Activated T-helper 1 cell treated with anti-CD3 and anti-CD28 coated beads, Interleukin-12 subunit alpha, Interleukin-12 subunit beta, Interleukin-2, Interleukin-4 antibody, amounts not matched to agents 30 ng/mL and 10 ng/mL and 1 ng/mL, durations not matched to agents 14 hours and 24 hours and 36 hours (primary cell): ENCODE measurements at regions of chr18 and their contacts with region 1.

Region 1: DNA sequence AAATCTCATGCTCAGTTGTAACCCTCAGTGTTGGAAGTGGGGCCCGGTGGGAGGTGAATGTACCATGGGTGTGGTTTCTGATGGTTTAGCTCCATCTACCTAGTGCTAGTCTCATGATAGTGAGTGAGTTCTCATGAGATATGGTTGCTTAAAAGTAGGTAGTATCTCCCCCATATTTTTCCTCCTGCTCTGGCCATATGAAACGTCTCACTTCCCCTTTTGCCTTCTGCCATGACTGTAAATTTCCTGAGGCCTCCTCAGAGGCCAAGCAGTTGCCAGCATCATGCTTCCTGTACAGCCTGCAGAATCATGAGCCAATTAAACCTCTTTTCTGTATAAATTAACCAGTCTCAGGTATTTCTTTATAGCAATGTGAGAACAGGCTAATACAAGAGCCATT is 62.8 kb upstream of the RNF152 start:
- DNase-seq: no peak
- H3K4me3 Mint-ChIP-seq: no peak overlapping the region
- H3K27ac Mint-ChIP-seq: no peak overlapping the region
- H3K4me1 Mint-ChIP-seq: peaks cover 49% of the 10 kb centered on the region
- H3K27me3 Mint-ChIP-seq: peaks cover 29% of the 10 kb centered on the region

Region 2: GRCh38 chr18:61765097-61765496 is 190.5 kb before region 1 on chr18:
- intact Hi-C with region 1: loop called (anchors 10 kb)
- DNase-seq: no peak
- H3K4me3 Mint-ChIP-seq: no peak overlapping the region
- H3K27ac Mint-ChIP-seq: no peak overlapping the region
- H3K4me1 Mint-ChIP-seq: no peaks in the 10 kb centered on the region
- H3K27me3 Mint-ChIP-seq: peaks cover 18% of the 10 kb centered on the region

Region 3: DNA sequence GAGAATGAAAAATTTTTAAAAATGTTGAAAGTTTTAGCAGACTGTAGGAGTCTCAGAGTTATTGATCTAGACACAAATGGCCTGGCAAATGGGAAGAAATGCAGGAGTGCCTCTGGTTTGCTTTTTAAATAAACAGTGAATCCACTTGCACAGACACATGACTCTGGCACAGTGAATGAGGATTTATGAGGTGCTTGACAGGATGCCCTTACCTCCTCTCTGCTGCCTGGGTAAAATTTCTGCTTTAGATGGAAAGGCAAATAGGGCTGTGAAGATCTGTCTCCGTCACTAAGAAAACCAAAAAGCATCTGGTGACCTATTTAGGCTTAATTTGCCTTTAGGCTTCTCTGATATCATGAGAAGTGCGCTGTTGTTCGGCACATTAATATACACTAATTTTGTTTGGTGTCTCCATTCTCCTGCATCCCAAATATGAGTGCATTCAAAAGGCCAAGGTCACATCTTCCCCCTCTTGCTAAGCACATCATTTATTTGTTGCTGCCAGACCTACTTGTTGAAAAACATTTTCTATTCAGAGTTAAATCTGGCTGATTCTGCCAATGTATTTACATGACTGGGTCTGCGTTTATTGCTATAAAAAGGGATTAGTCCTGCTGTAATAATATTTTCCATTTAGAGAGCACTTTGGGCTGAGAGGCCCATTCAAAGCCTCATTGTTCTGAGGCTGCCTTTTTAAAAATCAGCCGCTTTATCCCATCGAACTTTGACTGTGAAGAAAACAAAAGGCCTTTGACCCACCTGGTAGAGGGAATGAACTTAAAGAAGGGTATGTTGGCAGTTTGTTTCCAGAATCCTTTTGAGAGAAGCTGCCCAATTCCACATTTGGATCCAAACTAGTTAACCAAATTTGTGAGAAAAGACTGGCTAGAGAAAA is 157.7 kb before region 1 on chr18:
- intact Hi-C with region 1: no loop called
- DNase-seq: no peak
- H3K4me3 Mint-ChIP-seq: no peak overlapping the region
- H3K27ac Mint-ChIP-seq: no peak overlapping the region
- H3K4me1 Mint-ChIP-seq: no peaks in the 10 kb centered on the region
- H3K27me3 Mint-ChIP-seq: peaks cover 6% of the 10 kb centered on the region

Region 4: DNA sequence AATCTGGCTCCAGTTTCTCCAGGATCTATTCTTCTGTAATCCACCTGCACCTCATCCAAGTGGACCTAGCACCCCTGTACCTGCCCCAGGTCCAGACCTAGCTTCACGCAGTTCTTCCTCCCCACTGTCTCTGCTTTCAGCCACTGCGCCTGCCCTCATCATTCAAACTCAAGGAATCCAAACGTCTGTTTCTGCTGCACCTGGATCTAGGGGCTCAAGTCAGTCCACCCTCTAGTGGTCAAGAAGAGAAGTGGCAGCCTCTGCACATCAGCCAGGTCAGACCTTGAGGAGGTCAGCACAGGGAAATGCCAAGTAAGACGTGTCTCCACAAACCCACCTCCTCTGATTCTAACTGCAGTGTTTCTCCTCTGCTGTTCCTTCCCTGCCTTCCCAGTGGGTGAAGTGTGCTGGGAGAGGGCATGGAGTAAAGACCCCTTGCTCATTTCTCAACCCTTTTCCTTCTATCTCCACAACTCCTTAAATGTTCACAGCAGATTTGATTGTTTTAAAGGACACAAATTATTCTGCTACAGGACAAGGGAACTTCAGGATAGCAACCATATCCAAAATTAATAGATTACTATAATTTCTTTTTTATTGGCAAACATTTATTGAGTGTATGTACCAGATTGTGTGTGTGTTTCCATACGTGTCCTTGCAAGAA is 54.2 kb before region 1 on chr18:
- intact Hi-C with region 1: no loop called
- DNase-seq: no peak
- H3K4me3 Mint-ChIP-seq: no peak overlapping the region
- H3K27ac Mint-ChIP-seq: no peak overlapping the region
- H3K4me1 Mint-ChIP-seq: no peaks in the 10 kb centered on the region
- H3K27me3 Mint-ChIP-seq: peaks cover 41% of the 10 kb centered on the region

Region 5: GRCh38 chr18:61917818-61918217 is 37.8 kb before region 1 on chr18:
- intact Hi-C with region 1: loop called (anchors 1 kb)
- DNase-seq: no peak
- H3K4me3 Mint-ChIP-seq: no peak overlapping the region
- H3K27ac Mint-ChIP-seq: peak overlapping the region; percentile 31
- H3K4me1 Mint-ChIP-seq: peaks cover 28% of the 10 kb centered on the region
- H3K27me3 Mint-ChIP-seq: peaks cover 3% of the 10 kb centered on the region

Region 6: GRCh38 chr18:61943175-61943964 is 12.3 kb before region 1 on chr18:
- intact Hi-C with region 1: loop called (anchors 1 kb)
- DNase-seq: no peak
- H3K4me3 Mint-ChIP-seq: no peak overlapping the region
- H3K27ac Mint-ChIP-seq: no peak overlapping the region
- H3K4me1 Mint-ChIP-seq: peaks cover 18% of the 10 kb centered on the region
- H3K27me3 Mint-ChIP-seq: peaks cover 16% of the 10 kb centered on the region

Region 7: GRCh38 chr18:62505669-62506494 is 550.2 kb after region 1 on chr18:
- intact Hi-C with region 1: loop called (anchors 10 kb)
- DNase-seq: peak; percentile 25
- H3K4me3 Mint-ChIP-seq: peak overlapping the region; percentile 81
- H3K27ac Mint-ChIP-seq: peak overlapping the region; percentile 96
- H3K4me1 Mint-ChIP-seq: peaks cover 23% of the 10 kb centered on the region
- H3K27me3 Mint-ChIP-seq: peaks cover 2% of the 10 kb centered on the region